Dorsolateral prefrontal cortex (tissue), 120 donors: ENCODE measurements at regions of chr5 and their contacts with region 1.

Region 1: GRCh38 chr5:82351754-82352145 is 73.6 kb upstream of the RPS23 start:
- DNase-seq: peak in 1 of 10 donors; percentile 16
- H3K4me3 ChIP-seq: no peak overlapping the region
- H3K27ac ChIP-seq: peak overlapping the region in 17 of 59 donors; percentile 3 to 50 (median 27)
- H3K27me3 ChIP-seq: no peaks in the 10 kb centered on the region
- CTCF ChIP-seq: peak; percentile 53 to 96 (median 86)

Region 2: DNA sequence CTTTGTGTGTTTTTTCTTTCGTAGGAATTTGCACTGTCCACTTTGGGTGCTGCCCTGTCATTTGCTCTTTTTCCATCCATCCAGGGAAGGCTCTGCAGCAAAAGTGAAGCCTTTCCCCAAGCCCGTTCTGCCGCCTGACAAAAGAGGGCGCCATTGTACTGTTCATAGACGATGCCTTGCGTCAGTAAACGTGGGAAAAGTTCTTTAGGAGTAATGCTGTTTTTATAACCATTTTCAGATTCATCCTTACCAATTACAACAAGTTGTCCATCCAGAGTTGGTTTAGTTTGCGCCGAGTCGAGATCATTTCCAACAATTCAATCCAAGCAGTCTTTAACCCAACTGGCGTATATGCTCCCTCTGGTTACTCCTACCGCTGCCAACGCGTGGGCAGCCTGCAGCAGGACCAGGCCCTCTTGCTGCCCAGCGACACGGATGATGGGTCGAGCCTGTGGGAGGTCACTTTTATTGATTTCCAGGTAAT is 39.3 kb before region 1 on chr5:
- intact Hi-C with region 1: loop called in 1 of 2 experiments (anchors 5 kb)
- DNase-seq: peak; percentile 19 to 76 (median 68)
- H3K4me3 ChIP-seq: no peak overlapping the region
- H3K27ac ChIP-seq: no peak overlapping the region
- H3K27me3 ChIP-seq: no peaks in the 10 kb centered on the region
- CTCF ChIP-seq: peak; percentile 42 to 93 (median 80)

Region 3: DNA sequence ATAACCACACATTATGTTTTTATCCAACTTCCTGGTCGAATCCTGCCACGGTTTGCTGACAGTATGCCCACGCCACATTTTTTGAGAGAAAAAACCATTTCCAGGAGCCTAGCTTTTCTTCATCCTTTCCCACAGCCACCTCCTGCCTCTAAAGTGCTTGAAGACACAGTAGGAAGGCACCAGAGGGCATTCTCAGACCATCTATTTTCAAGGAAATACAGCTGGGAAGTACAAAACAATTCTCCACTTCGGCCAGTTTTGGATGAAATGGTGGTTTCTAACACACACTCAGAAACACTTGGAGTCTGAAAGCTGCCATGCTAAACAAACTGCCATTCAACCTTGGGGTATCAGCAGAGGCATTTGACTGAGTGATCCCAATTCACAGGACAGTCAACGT is 12.7 kb after region 1 on chr5:
- intact Hi-C with region 1: no loop called
- DNase-seq: no peak
- H3K4me3 ChIP-seq: no peak overlapping the region
- H3K27ac ChIP-seq: no peak overlapping the region
- H3K27me3 ChIP-seq: no peaks in the 10 kb centered on the region
- CTCF ChIP-seq: peak in 52 of 56 donors; percentile 11 to 71 (median 42)

Region 4: GRCh38 chr5:82635561-82636288 is 284.0 kb after region 1 on chr5:
- intact Hi-C with region 1: loop called (anchors 5 to 10 kb)
- DNase-seq: no peak
- H3K4me3 ChIP-seq: no peak overlapping the region
- H3K27ac ChIP-seq: no peak overlapping the region
- H3K27me3 ChIP-seq: no peaks in the 10 kb centered on the region
- CTCF ChIP-seq: no peak

Region 5: GRCh38 chr5:82641331-82642003 is 289.7 kb after region 1 on chr5:
- intact Hi-C with region 1: loop called (anchors 5 to 10 kb)
- DNase-seq: peak in 7 of 10 donors; percentile 22 to 73 (median 47)
- H3K4me3 ChIP-seq: peak overlapping the region in 16 of 59 donors; percentile 2 to 38 (median 22)
- H3K27ac ChIP-seq: peak overlapping the region in 43 of 59 donors; percentile 16 to 77 (median 58)
- H3K27me3 ChIP-seq: no peaks in the 10 kb centered on the region
- CTCF ChIP-seq: peak; percentile 60 to 93 (median 77)

Region 6: GRCh38 chr5:82793808-82794419 is 442.2 kb after region 1 on chr5:
- intact Hi-C with region 1: loop called in 1 of 2 experiments (anchors 5 kb)
- DNase-seq: peak in 1 of 10 donors; percentile 22
- H3K4me3 ChIP-seq: no peak overlapping the region
- H3K27ac ChIP-seq: no peak overlapping the region
- H3K27me3 ChIP-seq: no peaks in the 10 kb centered on the region
- CTCF ChIP-seq: peak in 55 of 56 donors; percentile 39 to 81 (median 68)

Region 7: DNA sequence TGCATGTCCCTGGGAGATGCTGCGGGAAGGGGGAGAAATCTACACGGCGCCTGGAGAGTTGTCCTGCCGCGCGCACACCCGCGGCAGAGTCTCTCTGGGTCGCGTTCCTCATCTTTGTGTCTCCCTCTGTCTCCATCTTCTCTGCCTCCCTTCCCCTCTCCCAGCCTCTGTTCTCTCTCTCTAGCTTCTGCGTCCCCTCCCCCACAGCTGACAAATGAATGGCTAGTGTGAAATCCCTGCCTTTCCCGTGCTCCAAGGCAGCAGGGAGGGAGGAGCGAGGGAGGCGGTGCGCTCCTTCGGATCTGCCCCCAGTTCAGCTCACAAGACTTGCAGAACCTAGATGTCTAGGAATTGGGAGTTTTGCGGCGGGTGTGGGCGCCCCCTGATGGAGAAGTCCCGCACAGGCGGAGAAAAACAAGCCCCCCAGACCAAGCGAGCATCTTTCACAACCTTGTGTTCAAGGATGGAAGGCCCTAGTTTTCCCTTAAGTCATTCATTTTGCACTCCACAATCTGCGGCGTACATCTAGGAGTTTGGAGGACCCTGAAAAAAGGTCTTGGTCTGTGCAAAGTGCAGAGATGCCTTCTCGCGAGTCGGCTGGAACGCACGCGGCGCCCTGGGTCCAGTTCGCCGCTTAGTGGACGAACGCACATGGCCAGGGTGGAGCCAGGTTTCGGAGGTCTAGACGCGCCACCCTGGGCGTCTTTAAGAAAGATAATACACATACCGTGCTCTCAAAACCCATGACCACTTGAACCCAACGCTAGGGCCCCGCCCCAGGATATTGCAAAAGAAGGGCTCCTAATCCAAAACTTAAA is 1121.8 kb after region 1 on chr5:
- intact Hi-C with region 1: loop called (anchors 5 to 10 kb)
- DNase-seq: peak; percentile 38 to 86 (median 80)
- H3K4me3 ChIP-seq: peak overlapping the region; percentile 37 to 75 (median 59)
- H3K27ac ChIP-seq: peak overlapping the region in 28 of 59 donors; percentile 8 to 75 (median 50)
- H3K27me3 ChIP-seq: peaks cover 0 to 89% (median 41%) of the 10 kb centered on the region in 45 donors
- CTCF ChIP-seq: peak; percentile 53 to 91 (median 82)

Region 8: GRCh38 chr5:83564069-83564749 is 1212.5 kb after region 1 on chr5:
- intact Hi-C with region 1: loop called (anchors 2 to 5 kb)
- DNase-seq: no peak
- H3K4me3 ChIP-seq: peak overlapping the region in 16 of 59 donors; percentile 1 to 50 (median 31)
- H3K27ac ChIP-seq: peak overlapping the region in 47 of 59 donors; percentile 27 to 90 (median 80)
- H3K27me3 ChIP-seq: no peaks in the 10 kb centered on the region
- CTCF ChIP-seq: peak; percentile 63 to 92 (median 82)